ENCODE measurements at regions of chr2 and their contacts with region 1.

Region 1: DNA sequence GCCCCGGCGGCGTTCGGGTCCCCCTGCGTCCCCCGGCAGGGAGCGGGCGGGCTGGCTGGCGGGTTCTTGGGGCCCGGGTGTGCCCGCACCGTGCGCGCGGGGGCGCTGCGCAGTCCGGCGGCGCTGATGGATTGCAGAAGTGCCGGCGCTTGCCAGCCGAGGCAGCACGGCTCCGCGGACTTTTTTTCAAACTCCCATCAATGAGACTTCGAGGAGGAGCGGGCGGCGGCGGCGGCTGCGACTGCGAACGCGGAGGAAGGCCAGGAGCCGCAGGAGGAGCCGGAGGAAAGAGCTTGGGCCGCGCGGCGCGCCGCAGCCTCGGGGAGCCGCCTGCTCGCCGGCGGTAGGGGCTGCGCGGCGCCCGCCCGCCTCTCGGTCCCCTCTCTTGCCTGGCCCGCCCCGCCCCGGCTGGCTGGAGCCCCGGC is at the start of gene GLI2:
- DNase-seq: peak; percentile 67 to 73 (median 68)
- ATAC-seq: peak; percentile 63
- H3K4me3 ChIP-seq: no peak within 1 kb of the TSS
- H3K4me1 ChIP-seq: peaks cover 33% of the 10 kb centered on the region
- CTCF ChIP-seq: peak; percentile 36
- total RNA-seq, gene GLI2: 1.0 to 7.3 (median 1.3) TPM

Region 2: GRCh38 chr2:120680136-120680761 is 55.5 kb before region 1 on chr2:
- intact Hi-C with region 1: no loop called
- DNase-seq: peak in 2 of 3 donors; percentile 68 to 84
- ATAC-seq: peak; percentile 88
- H3K4me3 ChIP-seq: no peak overlapping the region
- H3K4me1 ChIP-seq: no peaks in the 10 kb centered on the region
- CTCF ChIP-seq: no peak

Region 3: DNA sequence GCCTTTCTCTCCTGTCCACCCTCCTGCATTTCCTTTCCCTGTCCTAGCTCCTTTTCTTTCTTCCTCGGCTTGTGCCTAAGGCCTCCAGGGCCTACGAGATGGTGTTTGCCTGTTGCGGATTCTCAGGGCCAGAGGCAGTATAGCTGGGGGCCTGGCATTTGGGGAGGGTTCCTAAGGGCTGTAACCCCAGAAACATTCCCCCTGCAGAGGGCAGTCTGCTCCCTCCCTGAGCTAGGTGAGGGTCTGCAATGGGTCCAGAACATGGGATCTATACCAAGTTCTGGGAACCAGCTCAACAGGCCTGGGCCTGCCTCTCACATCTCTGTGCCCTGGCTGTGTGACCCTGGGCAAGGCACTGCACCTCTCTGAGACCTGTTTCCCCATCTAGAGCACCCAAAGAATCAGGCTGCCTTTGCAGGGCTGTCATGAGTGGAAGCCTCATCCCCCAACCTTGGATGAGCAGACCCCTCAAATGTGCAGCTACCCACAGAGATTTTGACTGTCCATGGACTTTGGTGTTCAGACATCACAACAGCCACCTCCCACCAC is 97.4 kb after region 1 on chr2:
- intact Hi-C with region 1: loop called in 1 of 2 experiments (anchors 10 kb)
- DNase-seq: peak in 1 of 3 donors; percentile 18
- ATAC-seq: no peak
- H3K4me3 ChIP-seq: no peak overlapping the region
- H3K4me1 ChIP-seq: no peaks in the 10 kb centered on the region
- CTCF ChIP-seq: no peak

Measured in mucosa of descending colon (tissue), 3 donors.